ENCODE measurements at regions of chrX and their contacts with region 1.

Region 1: GRCh38 chrX:68828740-68829552 is at the start of gene EFNB1:
- DNase-seq: peak; percentile 96
- H3K4me3 ChIP-seq: peak within 1 kb of the TSS; percentile 65 to 79 (median 70)
- H3K27ac ChIP-seq: peak within 1 kb of the TSS; percentile 81 to 86 (median 84)
- H3K4me1 ChIP-seq: peaks cover 6 to 44% (median 38%) of the 10 kb centered on the region in 4 donors
- H3K27me3 ChIP-seq: peaks cover 0 to 6% (median 0%) of the 10 kb centered on the region in 4 donors
- CTCF ChIP-seq: no peak
- EP300 ChIP-seq: no peak
- POLR2A ChIP-seq: peak; percentile 16
- total RNA-seq, gene EFNB1: 16.2 to 37.3 (median 23.9) TPM

Region 2: GRCh38 chrX:68894513-68895340 is 65.8 kb after region 1 on chrX:
- intact Hi-C with region 1: loop called (anchors 2 kb)
- DNase-seq: no peak
- H3K4me3 ChIP-seq: peak overlapping the region; percentile 31 to 39 (median 34)
- H3K27ac ChIP-seq: peak overlapping the region; percentile 76 to 89 (median 84)
- H3K4me1 ChIP-seq: peaks cover 38 to 46% (median 43%) of the 10 kb centered on the region in 4 donors
- H3K27me3 ChIP-seq: no peaks in the 10 kb centered on the region
- CTCF ChIP-seq: no peak
- EP300 ChIP-seq: no peak
- POLR2A ChIP-seq: no peak

Region 3: GRCh38 chrX:68915778-68916177 is 86.8 kb after region 1 on chrX:
- intact Hi-C with region 1: no loop called
- DNase-seq: no peak
- H3K4me3 ChIP-seq: no peak overlapping the region
- H3K27ac ChIP-seq: no peak overlapping the region
- H3K4me1 ChIP-seq: peaks cover 0 to 22% (median 15%) of the 10 kb centered on the region in 4 donors
- H3K27me3 ChIP-seq: no peaks in the 10 kb centered on the region
- CTCF ChIP-seq: no peak
- EP300 ChIP-seq: no peak
- POLR2A ChIP-seq: no peak

Region 4: DNA sequence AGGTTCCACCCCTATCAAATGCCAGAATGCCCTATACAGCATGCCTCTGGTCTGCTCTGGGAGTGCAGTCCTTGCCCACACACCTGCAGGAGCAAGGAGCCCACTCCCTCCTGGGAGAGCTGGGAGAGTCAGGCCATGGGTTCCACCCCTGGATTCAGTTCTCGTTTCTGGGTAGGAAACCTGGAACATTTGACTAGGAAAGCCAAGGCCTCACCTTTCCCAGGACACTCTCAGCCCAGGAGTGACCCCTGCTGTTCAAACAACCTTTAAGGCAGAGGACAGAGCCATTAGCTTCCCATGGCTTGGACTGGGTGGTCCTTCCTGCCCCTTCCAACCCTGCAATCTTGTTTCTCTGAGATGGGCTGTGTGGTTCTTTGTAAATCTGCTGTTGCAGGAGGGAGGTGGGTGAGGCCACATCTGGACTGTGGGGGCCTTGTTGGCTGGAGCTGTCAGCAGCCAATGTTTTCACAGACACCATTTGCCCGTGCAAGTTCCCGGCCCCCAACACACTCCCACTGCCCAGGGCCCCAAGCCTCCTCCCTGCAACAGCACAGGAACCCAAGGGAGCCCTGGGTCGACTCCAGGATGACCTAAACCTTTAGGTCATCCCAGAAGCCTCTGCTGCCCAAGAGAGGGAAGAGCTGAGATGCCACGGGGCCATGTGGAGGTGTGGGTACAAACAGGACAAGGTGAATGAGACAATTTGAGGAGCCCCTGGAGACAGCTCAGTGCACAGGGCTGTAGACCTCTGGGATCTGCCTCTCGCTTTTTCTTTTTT is 231.9 kb after region 1 on chrX:
- intact Hi-C with region 1: loop called (anchors 1 kb)
- DNase-seq: no peak
- H3K4me3 ChIP-seq: no peak overlapping the region
- H3K27ac ChIP-seq: no peak overlapping the region
- H3K4me1 ChIP-seq: peaks cover 0 to 5% (median 0%) of the 10 kb centered on the region in 4 donors
- H3K27me3 ChIP-seq: no peaks in the 10 kb centered on the region
- CTCF ChIP-seq: peak; percentile 37 to 53 (median 40)
- EP300 ChIP-seq: no peak
- POLR2A ChIP-seq: no peak

Region 5: DNA sequence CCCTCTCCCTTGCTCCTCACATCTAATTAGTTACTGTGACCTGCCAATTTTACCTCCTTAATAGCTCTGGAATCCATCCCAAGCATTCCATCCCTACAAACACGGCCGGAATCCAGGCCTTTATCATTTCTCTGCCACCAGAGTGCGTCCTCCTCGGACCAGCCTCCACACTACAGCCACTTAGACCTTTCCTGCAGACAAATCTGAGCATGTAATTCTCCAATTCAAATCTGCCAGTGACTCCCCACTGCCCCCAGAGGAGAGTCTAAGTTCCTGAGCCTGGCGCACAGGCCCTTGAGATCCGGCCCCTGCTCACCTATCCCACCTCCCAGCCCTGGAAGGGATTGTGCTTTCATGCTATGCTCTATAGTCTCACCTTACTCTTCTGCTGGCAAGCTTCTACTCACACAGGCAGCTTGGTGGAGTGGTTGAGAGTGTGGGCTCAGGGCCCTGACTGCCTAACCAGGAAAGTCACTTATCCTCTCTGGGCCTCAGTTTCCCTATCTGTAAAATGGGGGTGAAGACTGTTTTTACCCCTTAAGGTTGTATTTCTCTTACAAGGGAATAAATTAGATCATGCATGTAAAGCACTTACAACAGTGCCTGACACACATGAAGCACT is 305.1 kb after region 1 on chrX:
- intact Hi-C with region 1: loop called (anchors 10 kb)
- DNase-seq: no peak
- H3K4me3 ChIP-seq: no peak overlapping the region
- H3K27ac ChIP-seq: no peak overlapping the region
- H3K4me1 ChIP-seq: peaks cover 0 to 26% (median 18%) of the 10 kb centered on the region in 4 donors
- H3K27me3 ChIP-seq: no peaks in the 10 kb centered on the region
- CTCF ChIP-seq: peak in 1 of 3 experiments; percentile 43
- EP300 ChIP-seq: no peak
- POLR2A ChIP-seq: no peak

Region 6: DNA sequence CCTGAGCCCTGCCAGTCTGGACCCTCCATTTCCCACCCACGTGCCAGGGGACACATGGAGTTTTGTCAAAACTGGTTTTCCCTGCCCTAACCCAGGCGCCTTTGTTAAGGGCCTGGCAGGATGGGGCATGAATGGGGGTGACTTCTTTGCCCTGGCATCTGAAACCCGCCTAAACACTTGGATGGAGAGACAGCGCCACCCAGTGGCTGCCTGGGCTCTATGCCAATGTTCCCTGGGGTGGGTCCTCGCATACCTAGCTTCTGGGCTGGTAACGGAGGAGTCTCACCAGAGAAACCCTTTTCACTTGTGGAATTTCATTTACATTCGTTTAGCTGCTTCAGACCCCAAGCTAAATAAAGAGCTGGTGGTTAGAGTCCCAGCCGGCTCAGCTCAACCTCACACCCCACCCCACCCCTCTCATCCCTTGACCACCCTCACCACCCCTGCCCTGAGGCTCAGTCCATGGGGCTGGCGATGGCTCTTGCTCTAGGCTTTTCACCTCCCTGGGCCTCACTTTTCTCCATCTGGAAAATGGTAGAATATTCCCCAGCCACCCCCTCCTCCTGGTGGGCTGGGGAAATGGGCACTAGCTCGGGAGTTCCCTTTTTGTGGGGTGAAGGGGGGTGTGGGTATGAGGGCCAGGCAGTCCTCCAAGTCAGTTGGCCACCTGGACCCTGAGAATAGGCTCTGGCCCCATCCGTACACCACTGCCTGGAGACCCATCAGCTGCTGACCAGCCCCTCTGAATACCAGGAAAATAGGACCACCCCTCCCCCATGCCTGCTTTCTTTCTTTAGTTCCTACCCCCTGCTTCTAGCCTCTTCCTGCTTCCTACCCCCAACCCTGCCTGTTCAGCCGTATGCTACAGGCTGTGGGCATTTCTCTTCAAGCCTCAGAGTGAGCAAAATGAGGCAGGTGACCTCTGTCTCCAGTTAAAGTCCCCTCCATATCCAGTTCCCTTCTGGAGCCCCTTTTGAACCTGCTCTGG is 393.5 kb after region 1 on chrX:
- intact Hi-C with region 1: loop called (anchors 5 kb)
- DNase-seq: peak; percentile 92
- H3K4me3 ChIP-seq: no peak overlapping the region
- H3K27ac ChIP-seq: no peak overlapping the region
- H3K4me1 ChIP-seq: peaks cover 0 to 17% (median 9%) of the 10 kb centered on the region in 4 donors
- H3K27me3 ChIP-seq: no peaks in the 10 kb centered on the region
- CTCF ChIP-seq: peak; percentile 68 to 74 (median 70)
- EP300 ChIP-seq: no peak
- POLR2A ChIP-seq: no peak

Region 7: GRCh38 chrX:69285881-69286564 is 457.1 kb after region 1 on chrX:
- intact Hi-C with region 1: loop called (anchors 2 kb)
- DNase-seq: no peak
- H3K4me3 ChIP-seq: peak overlapping the region; percentile 47 to 59 (median 50)
- H3K27ac ChIP-seq: peak overlapping the region; percentile 28 to 72 (median 68)
- H3K4me1 ChIP-seq: peaks cover 6 to 27% (median 19%) of the 10 kb centered on the region in 4 donors
- H3K27me3 ChIP-seq: no peaks in the 10 kb centered on the region
- CTCF ChIP-seq: peak; percentile 81 to 88 (median 88)
- EP300 ChIP-seq: no peak
- POLR2A ChIP-seq: no peak

Region 8: DNA sequence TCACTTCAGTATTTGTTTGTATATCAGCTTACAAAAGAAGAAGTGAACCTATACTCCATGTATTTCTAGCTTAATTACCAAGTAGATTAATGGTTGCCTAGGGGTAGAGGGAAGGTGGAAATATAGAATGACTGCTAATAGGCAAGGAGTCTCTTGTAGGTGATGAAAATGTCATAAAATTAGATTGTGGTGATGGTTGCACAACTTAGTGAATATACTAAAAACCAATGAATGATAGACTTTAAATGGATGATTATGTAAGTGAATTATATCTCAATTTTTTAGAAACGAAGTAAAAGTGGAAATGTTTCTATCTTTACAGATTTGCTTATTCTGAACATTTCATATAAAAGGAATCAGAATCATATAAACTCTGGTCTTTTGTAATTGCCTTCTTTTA is 1055.3 kb after region 1 on chrX:
- intact Hi-C with region 1: no loop called
- DNase-seq: no peak
- H3K4me3 ChIP-seq: no peak overlapping the region
- H3K27ac ChIP-seq: no peak overlapping the region
- H3K4me1 ChIP-seq: no peaks in the 10 kb centered on the region
- H3K27me3 ChIP-seq: no peaks in the 10 kb centered on the region
- CTCF ChIP-seq: no peak
- EP300 ChIP-seq: no peak
- POLR2A ChIP-seq: no peak

Measured in esophagus muscularis mucosa (tissue), 4 donors.